MCF 10A (cell line): ENCODE measurements at regions of chr10 and their contacts with region 1.

Region 1: DNA sequence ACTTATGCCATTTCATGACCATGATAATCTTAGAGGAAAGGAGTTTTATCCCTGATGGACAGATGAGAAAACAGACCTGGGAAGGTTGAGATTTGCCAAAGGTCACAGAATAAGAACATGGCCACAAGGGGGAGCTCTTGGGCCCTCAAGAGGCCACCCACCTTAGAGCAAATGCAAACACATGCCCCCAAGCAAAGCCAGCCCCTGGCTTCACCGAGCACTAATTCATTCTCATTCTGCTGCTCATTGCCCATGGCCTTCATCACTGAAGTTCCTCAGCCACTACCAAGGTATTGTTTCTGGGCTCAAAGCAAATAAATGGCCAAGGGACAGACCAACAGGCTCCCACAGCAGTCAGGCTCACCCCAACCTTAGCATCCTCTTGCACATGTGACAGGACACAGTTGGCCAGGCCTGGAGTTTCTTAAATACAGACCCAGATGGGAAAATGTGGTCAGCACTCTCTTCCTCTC is 44.2 kb downstream of the PDLIM1 start:
- DNase-seq: peak; percentile 78
- H3K4me3 Mint-ChIP-seq: no peak overlapping the region
- H3K27ac Mint-ChIP-seq: no peak overlapping the region
- H3K4me1 Mint-ChIP-seq: peaks cover 27% of the 10 kb centered on the region
- H3K27me3 Mint-ChIP-seq: no peaks in the 10 kb centered on the region
- CTCF ChIP-seq: peak; percentile 81

Region 2: DNA sequence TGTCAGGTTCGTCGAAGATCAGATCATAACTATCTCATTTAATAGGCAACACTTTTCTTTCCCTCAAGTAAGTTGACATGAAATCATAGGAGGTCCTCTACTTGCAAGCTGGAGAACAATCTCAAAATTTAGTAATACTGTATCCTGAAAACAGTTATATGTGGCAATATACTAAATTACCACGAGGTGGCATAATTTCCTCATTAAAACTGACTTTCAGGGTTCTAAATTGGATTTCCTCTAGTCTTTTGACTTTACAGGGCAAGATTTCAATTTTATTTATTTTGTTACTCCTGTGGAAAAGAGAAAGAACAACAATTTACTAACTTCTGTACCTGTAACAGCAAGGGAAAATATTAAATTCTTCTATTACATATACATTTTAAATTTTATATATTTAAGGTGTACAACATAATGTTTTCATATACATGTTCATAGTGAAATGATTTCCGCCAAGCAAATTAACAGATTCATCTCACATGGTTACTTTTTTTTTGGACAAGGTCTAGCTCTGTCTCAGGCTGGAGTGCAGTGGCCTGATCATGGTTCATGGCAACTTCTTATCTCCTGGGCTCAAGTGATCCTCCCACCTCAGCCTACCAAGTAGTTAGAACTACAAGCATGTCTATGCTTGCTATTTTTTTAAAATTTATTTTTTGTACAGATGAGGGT is 616.5 kb before region 1 on chr10:
- CTCF ChIA-PET with region 1: interaction called, 22 read pairs
- POLR2A ChIA-PET with region 1: no interaction called
- intact Hi-C with region 1: loop called (anchors 1 kb)
- DNase-seq: peak; percentile 49
- H3K4me3 Mint-ChIP-seq: no peak overlapping the region
- H3K27ac Mint-ChIP-seq: no peak overlapping the region
- H3K4me1 Mint-ChIP-seq: no peaks in the 10 kb centered on the region
- H3K27me3 Mint-ChIP-seq: no peaks in the 10 kb centered on the region
- CTCF ChIP-seq: peak; percentile 51

Region 3: GRCh38 chr10:95196053-95196452 is 50.6 kb before region 1 on chr10:
- CTCF ChIA-PET with region 1: interaction called, 21 read pairs
- POLR2A ChIA-PET with region 1: interaction called, 3 read pairs
- intact Hi-C with region 1: loop called (anchors 1 kb)
- DNase-seq: no peak
- H3K4me3 Mint-ChIP-seq: no peak overlapping the region
- H3K27ac Mint-ChIP-seq: no peak overlapping the region
- H3K4me1 Mint-ChIP-seq: no peaks in the 10 kb centered on the region
- H3K27me3 Mint-ChIP-seq: peaks cover 13% of the 10 kb centered on the region
- CTCF ChIP-seq: no peak

Region 4: GRCh38 chr10:95229724-95230627 is 16.6 kb before region 1 on chr10:
- CTCF ChIA-PET with region 1: interaction called, 36 read pairs
- POLR2A ChIA-PET with region 1: no interaction called
- intact Hi-C with region 1: no loop called
- DNase-seq: peak; percentile 89
- H3K4me3 Mint-ChIP-seq: peak overlapping the region; percentile 66
- H3K27ac Mint-ChIP-seq: peak overlapping the region; percentile 99
- H3K4me1 Mint-ChIP-seq: peaks cover 24% of the 10 kb centered on the region
- H3K27me3 Mint-ChIP-seq: no peaks in the 10 kb centered on the region
- CTCF ChIP-seq: no peak

Region 5: GRCh38 chr10:95284807-95285206 is 38.2 kb after region 1 on chr10:
- CTCF ChIA-PET with region 1: interaction called, 14 read pairs
- POLR2A ChIA-PET with region 1: interaction called, 5 read pairs
- intact Hi-C with region 1: loop called (anchors 1 kb)
- DNase-seq: no peak
- H3K4me3 Mint-ChIP-seq: no peak overlapping the region
- H3K27ac Mint-ChIP-seq: no peak overlapping the region
- H3K4me1 Mint-ChIP-seq: peaks cover 24% of the 10 kb centered on the region
- H3K27me3 Mint-ChIP-seq: no peaks in the 10 kb centered on the region
- CTCF ChIP-seq: no peak

Region 6: GRCh38 chr10:95363303-95363912 is 116.8 kb after region 1 on chr10:
- CTCF ChIA-PET with region 1: interaction called, 713 read pairs
- POLR2A ChIA-PET with region 1: interaction called, 14 read pairs
- intact Hi-C with region 1: loop called (anchors 1 kb)
- DNase-seq: peak; percentile 84
- H3K4me3 Mint-ChIP-seq: no peak overlapping the region
- H3K27ac Mint-ChIP-seq: no peak overlapping the region
- H3K4me1 Mint-ChIP-seq: peaks cover 16% of the 10 kb centered on the region
- H3K27me3 Mint-ChIP-seq: peaks cover 18% of the 10 kb centered on the region
- CTCF ChIP-seq: peak; percentile 86